ENCODE measurements at regions of chr22 and their contacts with region 1.

Region 1: GRCh38 chr22:41468381-41469217 is at the starts of genes ACO2 and PHF5A:
- DNase-seq: peak; percentile 100
- H3K4me3 Mint-ChIP-seq: peak within 1 kb of the TSS; percentile 86
- H3K27ac Mint-ChIP-seq: peak within 1 kb of the TSS; percentile 97
- H3K4me1 Mint-ChIP-seq: peaks cover 35% of the 10 kb centered on the region
- H3K27me3 Mint-ChIP-seq: no peaks in the 10 kb centered on the region
- total RNA-seq, gene ACO2: 103 and 104 TPM in 2 replicates
- total RNA-seq, gene PHF5A: 90.3 and 98.3 TPM in 2 replicates

Region 2: GRCh38 chr22:41381329-41382097 is 87.1 kb before region 1 on chr22 and contains the start of gene TEF:
- intact Hi-C with region 1: loop called (anchors 1 kb)
- DNase-seq: peak; percentile 99
- H3K4me3 Mint-ChIP-seq: peak within 1 kb of the TSS; percentile 95
- H3K27ac Mint-ChIP-seq: peak within 1 kb of the TSS; percentile 95
- H3K4me1 Mint-ChIP-seq: peaks cover 12% of the 10 kb centered on the region
- H3K27me3 Mint-ChIP-seq: peaks cover 3% of the 10 kb centered on the region
- total RNA-seq, gene TEF: 2.0 and 2.1 TPM in 2 replicates

Region 3: DNA sequence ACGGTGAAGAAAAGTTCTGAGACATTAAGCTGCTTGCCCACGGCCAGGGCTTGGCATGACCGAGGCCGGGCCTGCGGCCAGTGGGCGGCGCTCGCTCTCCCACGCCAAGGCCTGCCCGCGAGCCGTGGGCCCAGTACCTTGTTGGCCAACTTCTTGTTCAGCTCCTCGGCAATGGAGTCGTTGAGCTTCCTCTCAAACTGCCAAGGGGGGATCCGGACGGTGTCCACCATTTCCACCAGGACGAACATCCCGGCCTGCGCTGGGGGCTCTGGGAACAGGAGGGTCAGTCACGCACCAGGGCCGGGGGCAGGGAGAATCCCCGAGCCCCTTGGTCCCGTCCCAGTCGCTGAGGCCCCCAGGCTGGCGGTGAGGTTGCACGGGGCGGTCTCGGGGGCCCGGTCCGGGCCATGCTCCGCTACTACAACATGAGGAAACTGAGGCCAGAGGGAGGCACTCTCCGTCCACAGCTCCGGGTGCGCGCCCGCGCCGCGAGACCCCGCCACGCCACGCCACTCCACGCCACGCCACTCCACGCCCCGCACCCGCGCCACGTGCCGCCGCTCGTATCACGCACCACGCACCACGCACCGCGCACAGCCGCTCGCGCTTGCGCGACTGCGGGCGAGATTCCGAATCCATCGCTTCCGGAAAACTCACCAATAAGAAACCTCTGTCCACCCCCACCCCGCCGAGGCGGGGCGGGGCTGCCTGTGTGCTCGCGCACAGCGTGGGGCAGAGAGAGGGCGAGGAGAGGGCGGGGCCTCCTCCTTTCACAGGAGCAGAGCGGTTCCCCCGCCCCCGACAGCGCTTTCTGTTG is 75.5 kb after region 1 on chr22 and contains the start of gene POLR3H:
- intact Hi-C with region 1: loop called (anchors 2 kb)
- DNase-seq: peak; percentile 99
- H3K4me3 Mint-ChIP-seq: peak within 1 kb of the TSS; percentile 95
- H3K27ac Mint-ChIP-seq: peak within 1 kb of the TSS; percentile 89
- H3K4me1 Mint-ChIP-seq: peaks cover 29% of the 10 kb centered on the region
- H3K27me3 Mint-ChIP-seq: no peaks in the 10 kb centered on the region
- total RNA-seq, gene POLR3H: 49.2 and 50.6 TPM in 2 replicates

Region 4: DNA sequence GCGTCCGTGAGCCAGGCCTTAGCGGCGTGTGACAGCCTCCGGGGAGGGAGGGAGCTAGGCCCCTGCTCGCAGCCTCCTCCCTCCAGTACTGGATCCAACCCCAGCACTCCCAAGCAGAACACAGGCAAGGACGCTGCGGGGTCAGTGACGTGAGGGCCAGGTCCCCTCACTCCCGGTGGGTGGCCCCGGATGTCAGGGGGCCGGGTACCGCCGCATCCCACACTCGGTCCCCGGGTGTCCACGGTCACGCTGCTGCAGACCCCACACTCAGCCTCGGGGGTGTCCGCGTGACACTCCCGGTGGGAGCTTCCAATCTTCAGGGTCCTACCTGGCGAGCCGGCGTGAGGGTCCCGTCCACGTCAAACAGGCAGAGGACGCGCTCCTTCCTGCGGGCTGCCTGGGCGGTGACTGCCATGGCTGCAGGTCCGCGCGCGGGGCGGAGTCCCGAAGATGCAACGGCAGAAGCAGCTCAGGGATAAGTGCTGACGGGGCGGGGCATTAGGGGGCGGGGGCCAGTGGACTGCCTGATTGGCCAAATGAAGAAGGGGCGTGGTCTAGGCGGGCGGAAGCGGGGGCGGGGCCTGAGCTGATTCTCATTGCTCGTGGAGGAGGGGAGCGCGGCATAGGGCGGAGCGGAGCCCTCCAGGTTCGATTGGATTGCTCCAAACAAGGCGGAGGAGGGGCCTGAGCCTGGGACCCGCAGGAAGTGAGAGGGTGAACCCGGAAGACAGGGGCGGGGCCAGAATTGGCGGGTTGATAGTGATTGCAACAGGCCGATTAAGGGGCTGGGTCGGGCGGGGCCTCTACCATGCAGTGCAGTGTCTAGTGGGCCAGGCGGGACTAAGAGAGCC is 121.0 kb after region 1 on chr22 and contains the start of gene PMM1:
- intact Hi-C with region 1: loop called (anchors 1 kb)
- DNase-seq: peak; percentile 100
- H3K4me3 Mint-ChIP-seq: peak within 1 kb of the TSS; percentile 95
- H3K27ac Mint-ChIP-seq: peak within 1 kb of the TSS; percentile 86
- H3K4me1 Mint-ChIP-seq: peaks cover 23% of the 10 kb centered on the region
- H3K27me3 Mint-ChIP-seq: no peaks in the 10 kb centered on the region
- total RNA-seq, gene PMM1: 19.7 and 23.1 TPM in 2 replicates

Region 5: DNA sequence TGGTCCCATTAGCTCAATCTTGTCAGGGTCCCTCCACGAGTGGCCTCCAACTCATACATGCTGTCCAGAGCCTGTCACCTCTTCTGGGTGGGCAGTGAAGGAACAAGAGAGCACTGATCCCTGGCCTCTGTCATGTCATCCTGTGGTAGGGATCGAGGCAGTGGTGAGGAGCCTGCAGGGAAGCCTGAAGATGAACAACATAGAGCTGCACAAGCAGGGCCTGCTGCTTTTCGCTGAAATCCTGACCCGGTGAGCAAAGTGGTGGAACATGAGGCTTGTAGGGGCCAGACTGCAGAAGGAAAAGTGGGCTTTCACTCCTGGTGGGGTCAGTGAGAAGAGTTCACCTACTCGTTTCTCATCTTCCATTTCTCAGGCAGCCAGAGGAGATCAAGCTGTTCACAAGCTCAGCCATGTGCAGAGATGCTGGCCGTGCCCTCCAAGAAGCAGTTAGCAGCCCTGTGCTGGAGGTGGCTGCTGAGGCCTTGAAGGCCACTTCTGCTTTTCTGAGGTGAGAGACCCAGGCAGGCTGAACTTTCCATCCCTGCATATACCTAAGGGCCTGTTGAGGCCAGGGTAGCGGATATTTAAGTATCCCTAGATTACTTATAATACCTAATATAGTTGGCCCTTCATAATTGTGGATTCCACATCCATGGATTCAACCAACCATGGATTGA is 263.6 kb after region 1 on chr22:
- intact Hi-C with region 1: no loop called
- DNase-seq: no peak
- H3K4me3 Mint-ChIP-seq: no peak overlapping the region
- H3K27ac Mint-ChIP-seq: no peak overlapping the region
- H3K4me1 Mint-ChIP-seq: no peaks in the 10 kb centered on the region
- H3K27me3 Mint-ChIP-seq: peaks cover 10% of the 10 kb centered on the region